ENCODE measurements at regions of chr6 and their contacts with region 1.

Region 1: DNA sequence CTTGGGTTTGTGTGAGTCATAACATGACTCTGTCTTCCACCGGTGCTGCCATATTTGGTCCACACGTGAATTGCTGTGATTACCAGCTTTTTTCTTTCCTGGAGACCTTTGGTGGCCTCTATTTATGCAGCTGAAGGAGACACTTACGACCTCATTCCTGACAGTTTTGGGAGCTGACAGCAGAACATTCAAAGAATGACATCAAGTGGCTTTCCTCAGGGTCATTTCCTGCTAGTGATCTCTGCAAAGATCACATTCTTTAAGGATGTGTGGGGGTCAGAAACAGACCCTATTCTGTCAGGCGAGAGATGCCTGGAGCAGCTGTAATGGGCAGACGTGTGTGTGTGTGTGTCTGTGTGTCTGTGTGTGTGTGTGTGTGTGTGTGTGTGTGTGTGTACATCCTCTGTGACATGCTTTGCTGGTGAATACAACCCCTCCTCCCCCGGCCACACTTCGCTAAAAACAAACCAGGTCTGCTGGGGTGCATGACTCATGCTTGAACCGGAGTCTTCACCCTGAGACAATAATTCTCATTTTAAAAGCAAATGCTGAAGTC is 115.6 kb downstream of the TMEM170B start:
- DNase-seq: peak; percentile 59
- H3K4me3 Mint-ChIP-seq: no peak overlapping the region
- H3K27ac Mint-ChIP-seq: no peak overlapping the region
- H3K4me1 Mint-ChIP-seq: no peaks in the 10 kb centered on the region
- H3K27me3 Mint-ChIP-seq: no peaks in the 10 kb centered on the region
- CTCF ChIP-seq: no peak

Region 2: DNA sequence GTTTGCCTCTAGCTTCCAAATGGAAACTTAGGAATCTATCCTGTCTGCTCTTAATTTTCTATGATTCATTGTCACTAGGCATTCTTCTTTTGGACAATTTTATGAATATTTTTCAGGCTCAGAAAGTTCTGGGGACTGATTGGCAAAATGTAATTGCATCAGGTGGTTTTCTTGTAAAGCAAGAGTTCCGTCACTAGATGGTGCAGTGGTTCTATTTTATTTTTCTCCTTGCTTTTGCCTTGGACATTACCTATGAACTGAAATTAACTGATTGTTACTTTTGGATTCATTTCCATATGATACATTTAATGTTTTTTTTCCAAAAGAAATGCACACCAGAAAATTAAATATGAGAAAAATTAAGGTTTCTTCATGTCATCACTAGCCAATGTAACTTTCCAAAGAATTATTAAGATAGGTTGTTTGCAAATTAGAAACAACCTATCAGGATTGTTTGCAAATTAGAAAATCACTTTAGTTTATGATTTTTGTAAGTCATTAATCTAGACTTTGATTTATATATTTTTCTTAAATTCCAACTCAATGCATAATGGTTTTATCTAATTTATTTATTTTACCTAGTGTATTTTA is 67.6 kb before region 1 on chr6:
- CTCF ChIA-PET with region 1: interaction called, 9 read pairs
- POLR2A ChIA-PET with region 1: no interaction called
- intact Hi-C with region 1: loop called (anchors 5 kb)
- DNase-seq: peak; percentile 61
- H3K4me3 Mint-ChIP-seq: no peak overlapping the region
- H3K27ac Mint-ChIP-seq: no peak overlapping the region
- H3K4me1 Mint-ChIP-seq: no peaks in the 10 kb centered on the region
- H3K27me3 Mint-ChIP-seq: no peaks in the 10 kb centered on the region
- CTCF ChIP-seq: peak; percentile 60

Region 3: GRCh38 chr6:11688425-11688709 is 35.3 kb after region 1 on chr6:
- CTCF ChIA-PET with region 1: interaction called, 12 read pairs
- POLR2A ChIA-PET with region 1: interaction called, 6 read pairs
- intact Hi-C with region 1: no loop called
- DNase-seq: no peak
- H3K4me3 Mint-ChIP-seq: no peak overlapping the region
- H3K27ac Mint-ChIP-seq: no peak overlapping the region
- H3K4me1 Mint-ChIP-seq: peaks cover 11% of the 10 kb centered on the region
- H3K27me3 Mint-ChIP-seq: no peaks in the 10 kb centered on the region
- CTCF ChIP-seq: no peak

Region 4: DNA sequence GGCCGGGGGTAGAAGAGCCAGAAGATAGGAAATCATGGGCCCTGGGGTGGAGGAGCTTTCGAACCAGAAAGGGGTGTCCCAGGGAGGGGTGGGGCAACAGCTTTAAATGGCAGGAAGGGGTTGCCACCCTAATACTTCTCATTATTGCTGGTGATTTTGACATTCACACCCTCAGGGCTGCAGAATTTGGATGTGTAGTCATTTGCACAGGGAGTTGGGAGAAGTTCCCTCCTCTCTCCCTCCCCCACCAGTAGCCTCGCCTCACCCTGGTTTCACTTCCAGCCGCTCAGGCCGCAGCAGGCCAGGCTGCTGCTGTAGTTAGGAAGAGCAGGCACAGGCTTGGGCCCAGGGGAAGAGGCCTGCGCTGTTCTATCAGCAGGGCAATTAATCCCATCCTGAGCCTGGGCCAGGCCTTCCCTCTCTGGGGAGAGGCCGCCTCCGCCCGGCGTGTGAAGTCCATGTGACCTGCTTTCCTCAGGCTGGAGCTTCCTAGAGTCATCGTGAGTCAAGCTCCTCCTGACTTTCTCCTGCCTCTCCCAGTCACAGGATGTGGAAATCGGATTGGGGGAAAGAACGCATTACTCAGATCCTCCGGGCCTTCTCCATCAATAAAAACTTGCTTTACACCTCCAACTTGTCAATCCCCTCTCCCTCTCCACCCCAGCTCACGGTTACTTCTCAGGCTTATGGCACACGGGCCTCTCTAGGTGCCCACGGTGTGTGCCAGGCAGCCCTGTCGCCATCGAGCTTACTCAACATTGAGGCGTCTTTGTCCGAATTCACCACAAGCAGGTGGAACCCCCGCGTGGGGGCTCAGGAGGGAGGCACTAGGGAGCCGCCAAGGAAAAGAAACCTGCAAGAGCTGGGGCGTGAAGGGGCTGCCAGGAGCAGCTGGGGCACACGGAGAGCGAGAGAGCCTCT is 117.7 kb after region 1 on chr6:
- CTCF ChIA-PET with region 1: interaction called, 3 read pairs
- POLR2A ChIA-PET with region 1: interaction called, 5 read pairs
- intact Hi-C with region 1: loop called (anchors 5 kb)
- DNase-seq: peak; percentile 100
- H3K4me3 Mint-ChIP-seq: peak overlapping the region; percentile 69
- H3K27ac Mint-ChIP-seq: peak overlapping the region; percentile 96
- H3K4me1 Mint-ChIP-seq: peaks cover 61% of the 10 kb centered on the region
- H3K27me3 Mint-ChIP-seq: no peaks in the 10 kb centered on the region
- CTCF ChIP-seq: no peak

Region 5: GRCh38 chr6:12033770-12034169 is 380.7 kb after region 1 on chr6:
- CTCF ChIA-PET with region 1: interaction called, 23 read pairs
- POLR2A ChIA-PET with region 1: interaction called, 3 read pairs
- intact Hi-C with region 1: loop called (anchors 2 kb)
- DNase-seq: peak; percentile 72
- H3K4me3 Mint-ChIP-seq: no peak overlapping the region
- H3K27ac Mint-ChIP-seq: peak overlapping the region; percentile 25
- H3K4me1 Mint-ChIP-seq: peaks cover 47% of the 10 kb centered on the region
- H3K27me3 Mint-ChIP-seq: no peaks in the 10 kb centered on the region
- CTCF ChIP-seq: no peak

Region 6: DNA sequence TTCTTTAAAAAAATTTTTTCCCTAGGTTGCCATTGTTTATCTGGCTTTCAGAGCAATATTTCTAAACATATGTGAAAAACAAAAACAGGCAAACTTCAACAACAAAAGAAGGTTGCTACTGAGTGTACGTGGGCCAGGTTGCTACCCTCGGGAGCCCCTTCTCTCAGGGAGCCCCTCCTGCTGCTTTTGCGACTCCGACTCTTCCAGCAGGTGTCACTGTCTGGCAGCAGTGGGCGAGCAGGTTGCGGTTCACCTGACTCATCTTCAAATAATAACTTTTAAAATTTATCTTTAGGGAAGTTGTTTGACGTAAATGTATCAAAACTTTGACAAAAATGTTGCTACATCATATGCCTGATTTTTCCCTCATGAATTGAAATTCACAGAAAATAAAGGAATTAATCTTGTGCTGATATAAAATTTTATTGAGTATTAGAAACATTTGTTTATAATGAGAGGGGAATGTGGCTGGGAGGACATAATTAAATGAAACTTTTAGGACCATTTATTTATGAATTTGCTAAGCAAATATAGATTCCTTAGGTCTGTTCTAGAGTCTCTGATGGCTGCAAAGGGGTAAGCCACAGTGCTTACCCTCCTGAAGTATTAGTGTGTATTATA is 497.8 kb after region 1 on chr6:
- CTCF ChIA-PET with region 1: interaction called, 3 read pairs
- POLR2A ChIA-PET with region 1: no interaction called
- intact Hi-C with region 1: loop called (anchors 2 kb)
- DNase-seq: peak; percentile 57
- H3K4me3 Mint-ChIP-seq: no peak overlapping the region
- H3K27ac Mint-ChIP-seq: no peak overlapping the region
- H3K4me1 Mint-ChIP-seq: peaks cover 17% of the 10 kb centered on the region
- H3K27me3 Mint-ChIP-seq: no peaks in the 10 kb centered on the region
- CTCF ChIP-seq: peak; percentile 69

Region 7: DNA sequence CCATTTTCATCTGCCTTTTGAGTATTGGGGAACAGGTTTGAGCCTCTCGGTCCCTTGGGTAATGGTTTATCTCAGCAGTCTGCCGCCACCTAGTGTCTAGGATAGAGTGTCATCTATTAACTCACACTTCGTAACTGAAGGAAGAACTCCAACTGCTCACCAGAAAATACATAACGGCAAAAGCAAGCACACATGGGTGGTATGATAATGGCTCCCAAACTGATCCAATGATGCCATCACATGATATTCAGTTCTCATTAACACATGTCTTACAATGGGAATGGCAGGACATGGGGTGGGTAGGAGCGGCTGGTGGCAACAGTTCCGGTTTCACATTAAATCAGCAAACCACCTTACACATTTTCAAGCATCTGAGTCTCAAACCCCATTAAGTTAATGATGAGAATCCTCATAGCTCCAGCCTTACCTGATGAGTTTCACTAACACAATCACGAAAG is 952.8 kb after region 1 on chr6:
- CTCF ChIA-PET with region 1: interaction called, 10 read pairs
- POLR2A ChIA-PET with region 1: interaction called, 3 read pairs
- intact Hi-C with region 1: loop called (anchors 2 kb)
- DNase-seq: peak; percentile 80
- H3K4me3 Mint-ChIP-seq: no peak overlapping the region
- H3K27ac Mint-ChIP-seq: no peak overlapping the region
- H3K4me1 Mint-ChIP-seq: peaks cover 30% of the 10 kb centered on the region
- H3K27me3 Mint-ChIP-seq: no peaks in the 10 kb centered on the region
- CTCF ChIP-seq: peak; percentile 69

Measured in MCF 10A (cell line).